CD8-positive, alpha-beta memory T cell (primary cell): ENCODE measurements at regions of chr15 and their contacts with region 1.

Region 1: GRCh38 chr15:68571582-68571981 is 7.2 kb upstream of the CORO2B start:
- DNase-seq: no peak
- H3K4me3 ChIP-seq: no peak overlapping the region
- H3K4me3 Mint-ChIP-seq: no peak overlapping the region
- H3K27ac ChIP-seq: no peak overlapping the region
- H3K27ac Mint-ChIP-seq: no peak overlapping the region
- H3K4me1 ChIP-seq: no peaks in the 10 kb centered on the region
- H3K4me1 Mint-ChIP-seq: no peaks in the 10 kb centered on the region
- H3K27me3 ChIP-seq: peaks cover 20% of the 10 kb centered on the region
- H3K27me3 Mint-ChIP-seq: peaks cover 24 to 76% of the 10 kb centered on the region in 2 donors

Region 2: DNA sequence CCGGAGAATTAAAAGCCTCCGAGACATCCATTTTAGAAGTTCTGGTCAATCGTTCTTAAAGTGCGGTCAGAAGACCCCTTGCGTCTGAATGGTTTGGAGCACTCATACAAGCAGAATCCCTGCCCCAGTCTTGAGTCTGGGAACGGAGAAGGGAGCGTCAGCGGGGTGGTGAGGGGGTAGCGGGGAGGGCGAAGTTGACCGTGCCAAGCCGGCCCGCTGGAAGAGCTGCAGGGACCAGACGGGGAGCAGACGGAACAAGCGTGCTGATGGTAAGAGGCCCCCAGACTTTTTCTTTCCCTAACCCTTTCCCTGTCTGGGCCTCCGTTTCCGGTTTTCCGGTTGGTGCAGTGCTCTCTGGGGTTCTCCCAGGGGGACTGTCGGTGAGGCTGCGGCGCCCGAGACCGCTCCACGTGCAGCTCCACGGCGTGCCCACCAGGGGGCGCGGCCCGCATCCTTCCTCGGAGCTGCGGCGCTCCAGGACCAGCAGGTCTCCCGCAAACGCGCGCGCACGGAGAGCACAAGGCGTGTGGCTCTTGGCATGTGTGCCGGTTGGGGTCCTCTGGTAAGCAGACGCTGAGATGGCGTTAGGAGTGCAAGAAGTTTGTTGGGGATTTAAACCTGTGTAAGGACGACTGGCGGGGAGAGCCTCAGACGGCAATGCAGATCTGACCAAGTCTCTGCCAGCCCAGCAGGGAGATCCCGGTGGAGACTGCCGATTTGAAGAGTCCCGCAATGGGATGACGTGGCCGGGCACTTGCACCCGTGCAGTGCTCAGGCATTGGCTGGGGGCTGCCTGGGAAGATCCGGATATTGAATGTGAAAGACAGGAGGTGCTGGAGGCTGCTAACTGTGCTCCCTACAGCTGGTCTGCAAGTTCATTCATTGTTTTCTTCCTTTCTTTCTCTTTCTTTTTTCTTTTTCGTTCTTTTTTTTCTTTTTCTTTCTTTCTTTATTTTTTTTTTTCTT is 12.0 kb before region 1 on chr15:
- CTCF ChIA-PET with region 1: interaction called, 12 read pairs
- POLR2A ChIA-PET with region 1: interaction called, 5 read pairs
- DNase-seq: peak; percentile 47 to 71 (median 55)
- H3K4me3 ChIP-seq: peak overlapping the region; percentile 36
- H3K4me3 Mint-ChIP-seq: peak overlapping the region; percentile 67 to 91 (median 78)
- H3K27ac ChIP-seq: no peak overlapping the region
- H3K27ac Mint-ChIP-seq: no peak overlapping the region
- H3K4me1 ChIP-seq: peaks cover 11% of the 10 kb centered on the region
- H3K4me1 Mint-ChIP-seq: peaks cover 17 to 22% (median 22%) of the 10 kb centered on the region in 3 donors
- H3K27me3 ChIP-seq: peaks cover 10% of the 10 kb centered on the region
- H3K27me3 Mint-ChIP-seq: peaks cover 24 to 67% of the 10 kb centered on the region in 2 donors